ENCODE measurements at regions of chr2 and their contacts with region 1.

Region 1: DNA sequence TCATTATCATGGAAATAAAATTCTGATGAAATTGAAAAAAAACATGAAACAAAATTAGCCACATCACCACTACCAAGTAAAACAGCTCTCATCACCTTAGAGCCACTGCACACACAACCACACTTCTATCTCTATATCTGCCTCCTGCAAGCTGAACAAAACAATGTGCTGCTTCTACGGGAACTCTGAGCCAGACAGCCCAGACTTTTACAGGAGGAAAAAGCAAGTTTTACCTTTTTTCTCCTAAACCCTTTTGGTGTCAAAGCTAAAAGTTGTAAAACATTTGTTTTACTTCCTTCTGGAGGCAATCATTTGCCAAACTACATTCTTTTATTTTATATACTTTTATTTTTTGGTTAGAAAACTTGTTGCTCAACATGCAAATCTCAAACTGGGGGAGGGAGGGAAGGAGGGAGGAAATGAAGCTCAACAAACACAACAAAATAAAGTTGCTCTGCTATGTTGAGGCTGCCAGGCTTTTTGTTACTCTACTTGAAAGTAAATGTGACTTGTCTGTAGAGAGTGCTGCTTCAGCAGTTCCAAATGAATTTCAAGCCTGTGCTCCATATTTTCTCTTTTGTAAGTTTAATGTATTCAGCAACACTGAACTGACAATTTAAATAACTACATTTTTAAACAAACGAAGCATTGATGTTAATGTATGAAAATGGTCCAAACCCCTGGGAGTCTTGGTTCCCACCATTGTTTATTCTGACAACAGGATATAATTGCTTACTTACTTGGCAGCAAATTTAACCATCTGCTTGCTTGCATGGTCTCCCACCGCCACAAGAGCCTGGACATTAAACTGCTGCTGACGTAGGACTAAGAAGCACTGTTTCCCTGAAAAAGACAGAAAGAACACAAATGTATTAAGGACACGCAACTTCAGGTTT is 24.5 kb downstream of the DARS1 start:
- DNase-seq: peak in 8 of 14 experiments; percentile 7 to 61 (median 28)
- ATAC-seq: peak; percentile 81
- H3K4me3 ChIP-seq: peak overlapping the region; percentile 6
- H3K4me3 Mint-ChIP-seq: peak overlapping the region; percentile 65
- H3K27ac ChIP-seq: peak overlapping the region; percentile 56 to 58
- H3K27ac Mint-ChIP-seq: peak overlapping the region; percentile 92
- H3K4me1 ChIP-seq: peaks cover 18% of the 10 kb centered on the region
- H3K4me1 Mint-ChIP-seq: peaks cover 63% of the 10 kb centered on the region
- H3K27me3 ChIP-seq: no peaks in the 10 kb centered on the region
- H3K27me3 Mint-ChIP-seq: no peaks in the 10 kb centered on the region
- CTCF ChIP-seq: no peak

Region 2: GRCh38 chr2:135931776-135932443 is 29.0 kb before region 1 on chr2:
- CTCF ChIA-PET with region 1: interaction called, 3 read pairs
- POLR2A ChIA-PET with region 1: interaction called, 4 read pairs
- intact Hi-C with region 1: loop called in 1 of 2 experiments (anchors 5 kb)
- DNase-seq: peak in 1 of 14 experiments; percentile 5
- ATAC-seq: no peak
- H3K4me3 ChIP-seq: no peak overlapping the region
- H3K4me3 Mint-ChIP-seq: no peak overlapping the region
- H3K27ac ChIP-seq: no peak overlapping the region
- H3K27ac Mint-ChIP-seq: peak overlapping the region; percentile 16
- H3K4me1 ChIP-seq: peaks cover 3% of the 10 kb centered on the region
- H3K4me1 Mint-ChIP-seq: peaks cover 14% of the 10 kb centered on the region
- H3K27me3 ChIP-seq: no peaks in the 10 kb centered on the region
- H3K27me3 Mint-ChIP-seq: no peaks in the 10 kb centered on the region
- CTCF ChIP-seq: no peak

Region 3: DNA sequence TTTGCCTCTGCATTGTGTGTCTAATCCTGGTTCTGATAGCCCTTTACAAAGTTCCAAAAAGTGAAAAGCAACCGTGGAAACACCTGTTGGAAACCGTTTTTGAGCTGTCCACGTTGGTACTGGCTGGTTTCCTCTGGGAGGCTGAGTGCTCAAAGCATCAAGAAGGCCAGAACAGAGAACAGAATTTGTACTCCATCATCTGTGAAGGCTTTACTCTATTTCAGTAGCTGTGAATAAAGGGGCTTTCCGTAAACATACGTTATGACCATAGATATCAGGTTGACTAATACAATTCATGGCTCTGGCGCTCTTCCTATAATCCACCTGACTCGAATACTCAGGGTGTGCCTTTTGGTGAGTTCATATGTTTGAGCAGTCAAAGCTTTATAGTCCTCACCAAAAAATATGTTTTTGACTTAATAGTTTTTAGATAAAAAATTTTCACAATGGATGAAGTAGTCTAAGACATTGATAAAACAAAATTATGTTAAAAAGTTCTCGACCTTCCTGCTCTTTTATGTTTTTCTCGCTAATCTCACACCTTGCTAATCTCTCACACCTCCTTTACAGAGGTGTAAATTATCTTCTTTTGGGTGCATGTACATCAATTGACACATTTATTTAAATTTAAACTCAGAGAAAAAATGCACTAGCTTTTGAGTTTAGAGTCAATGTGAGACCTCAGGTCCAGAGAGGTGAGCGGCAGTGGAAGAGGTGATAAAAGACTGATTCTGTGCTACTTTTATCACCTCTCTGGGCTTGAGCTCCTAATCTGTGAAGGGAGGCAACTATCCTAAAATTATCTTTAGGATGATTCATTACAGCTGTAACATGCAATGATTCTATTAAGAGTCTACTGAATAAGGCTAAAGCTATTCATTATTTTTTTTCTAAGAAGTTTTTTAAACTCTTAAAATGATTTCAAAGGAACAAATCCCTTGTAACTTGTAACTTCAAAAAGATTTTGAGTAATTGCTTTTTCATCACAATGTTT is 91.8 kb after region 1 on chr2:
- CTCF ChIA-PET with region 1: interaction called, 3 read pairs
- POLR2A ChIA-PET with region 1: interaction called, 3 read pairs
- intact Hi-C with region 1: loop called in 1 of 2 experiments (anchors 5 kb)
- DNase-seq: peak in 4 of 14 experiments; percentile 18 to 52 (median 41)
- ATAC-seq: no peak
- H3K4me3 ChIP-seq: no peak overlapping the region
- H3K4me3 Mint-ChIP-seq: peak overlapping the region; percentile 18
- H3K27ac ChIP-seq: peak overlapping the region; percentile 23 to 26
- H3K27ac Mint-ChIP-seq: peak overlapping the region; percentile 76
- H3K4me1 ChIP-seq: peaks cover 79% of the 10 kb centered on the region
- H3K4me1 Mint-ChIP-seq: peaks cover 83% of the 10 kb centered on the region
- H3K27me3 ChIP-seq: no peaks in the 10 kb centered on the region
- H3K27me3 Mint-ChIP-seq: no peaks in the 10 kb centered on the region
- CTCF ChIP-seq: no peak